ENCODE measurements at regions of chr2 and their contacts with region 1.

Region 1: GRCh38 chr2:27211829-27212627 is at the starts of genes ATRAID and SLC5A6:
- DNase-seq: peak; percentile 86 to 89
- ATAC-seq: peak; percentile 97 to 99 (median 98)
- H3K4me3 ChIP-seq: peak within 1 kb of the TSS; percentile 50 to 93 (median 77)
- H3K27ac ChIP-seq: peak within 1 kb of the TSS; percentile 89 to 99 (median 98)
- H3K4me1 ChIP-seq: peaks cover 7 to 29% (median 22%) of the 10 kb centered on the region in 9 donors
- H3K27me3 ChIP-seq: no peaks in the 10 kb centered on the region
- CTCF ChIP-seq: no peak
- total RNA-seq, gene ATRAID: 116 to 162 (median 129) TPM
- total RNA-seq, gene SLC5A6: 5.3 to 17.0 (median 8.8) TPM

Region 2: DNA sequence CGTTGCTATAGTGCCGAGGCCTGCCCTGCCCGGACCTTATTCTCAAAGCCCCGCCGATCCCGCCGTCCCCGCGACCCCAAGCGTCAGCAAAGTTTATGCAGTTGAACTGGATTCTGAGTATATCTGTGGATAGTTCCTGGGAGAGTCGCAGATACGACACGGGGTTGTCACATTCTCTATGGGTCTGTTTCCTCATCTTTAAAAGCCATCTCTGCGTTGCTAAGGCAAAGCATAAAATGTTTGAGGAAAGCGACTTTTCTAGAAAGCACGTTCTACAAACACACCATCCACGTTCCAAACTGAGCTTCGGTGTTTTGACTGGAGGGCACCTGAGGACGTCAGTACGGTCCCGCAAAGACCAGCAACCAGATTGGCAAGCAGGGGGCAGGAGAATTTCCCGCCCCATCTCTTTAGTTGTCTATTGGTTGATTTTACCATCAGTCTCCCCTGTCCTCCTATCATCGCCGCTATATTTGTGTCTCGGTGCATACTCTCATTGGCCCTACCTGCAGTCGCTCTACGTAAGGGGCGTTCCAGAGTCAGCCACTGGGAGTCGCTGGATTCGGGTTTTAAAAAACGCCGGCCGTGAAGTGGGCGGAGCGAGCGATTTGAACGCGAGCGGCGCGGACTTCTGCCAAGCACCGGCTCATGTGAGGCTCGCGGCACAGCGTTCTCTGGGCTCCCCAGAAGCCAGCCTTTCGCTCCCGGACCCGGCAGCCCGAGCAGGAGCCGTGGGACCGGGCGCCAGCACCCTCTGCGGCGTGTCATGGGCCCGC is 426.4 kb before region 1 on chr2 and contains the start of gene CENPA:
- intact Hi-C with region 1: loop called in 1 of 10 experiments (anchors 10 kb)
- DNase-seq: peak; percentile 94 to 99
- ATAC-seq: peak; percentile 98 to 100 (median 100)
- H3K4me3 ChIP-seq: peak within 1 kb of the TSS; percentile 54 to 94 (median 70)
- H3K27ac ChIP-seq: peak within 1 kb of the TSS in 5 of 10 donors; percentile 33 to 77 (median 42)
- H3K4me1 ChIP-seq: peaks cover 0 to 18% (median 12%) of the 10 kb centered on the region in 9 donors
- H3K27me3 ChIP-seq: peaks cover 0 to 6% (median 0%) of the 10 kb centered on the region in 7 donors
- CTCF ChIP-seq: peak in 8 of 9 donors; percentile 32 to 63 (median 54)
- total RNA-seq, gene CENPA: 0.30 to 33.1 (median 6.1) TPM in 8 of 10 donors, not detected in the others

Region 3: GRCh38 chr2:26970244-26970920 is 241.6 kb before region 1 on chr2 and contains the start of gene MAPRE3:
- intact Hi-C with region 1: loop called in 2 of 10 experiments (anchors 10 kb)
- DNase-seq: peak; percentile 77 to 86
- ATAC-seq: peak; percentile 93 to 96 (median 94)
- H3K4me3 ChIP-seq: peak within 1 kb of the TSS; percentile 68 to 95 (median 86)
- H3K27ac ChIP-seq: peak within 1 kb of the TSS in 9 of 10 donors; percentile 68 to 84 (median 81)
- H3K4me1 ChIP-seq: peaks cover 3 to 33% (median 26%) of the 10 kb centered on the region in 9 donors
- H3K27me3 ChIP-seq: peaks cover 0 to under 1% (median 0%) of the 10 kb centered on the region in 7 donors
- CTCF ChIP-seq: no peak
- total RNA-seq, gene MAPRE3: 34.9 to 62.0 (median 47.2) TPM

Region 4: GRCh38 chr2:27264753-27265535 is 52.9 kb after region 1 on chr2:
- intact Hi-C with region 1: no loop called
- DNase-seq: peak; percentile 71 to 77
- ATAC-seq: peak; percentile 68 to 88 (median 80)
- H3K4me3 ChIP-seq: peak overlapping the region in 9 of 10 donors; percentile 30 to 68 (median 63)
- H3K27ac ChIP-seq: peak overlapping the region in 8 of 10 donors; percentile 34 to 77 (median 48)
- H3K4me1 ChIP-seq: peaks cover 0 to 47% (median 34%) of the 10 kb centered on the region in 9 donors
- H3K27me3 ChIP-seq: peaks cover 0 to 97% (median 52%) of the 10 kb centered on the region in 7 donors
- CTCF ChIP-seq: peak in 8 of 9 donors; percentile 30 to 74 (median 57)

Region 5: DNA sequence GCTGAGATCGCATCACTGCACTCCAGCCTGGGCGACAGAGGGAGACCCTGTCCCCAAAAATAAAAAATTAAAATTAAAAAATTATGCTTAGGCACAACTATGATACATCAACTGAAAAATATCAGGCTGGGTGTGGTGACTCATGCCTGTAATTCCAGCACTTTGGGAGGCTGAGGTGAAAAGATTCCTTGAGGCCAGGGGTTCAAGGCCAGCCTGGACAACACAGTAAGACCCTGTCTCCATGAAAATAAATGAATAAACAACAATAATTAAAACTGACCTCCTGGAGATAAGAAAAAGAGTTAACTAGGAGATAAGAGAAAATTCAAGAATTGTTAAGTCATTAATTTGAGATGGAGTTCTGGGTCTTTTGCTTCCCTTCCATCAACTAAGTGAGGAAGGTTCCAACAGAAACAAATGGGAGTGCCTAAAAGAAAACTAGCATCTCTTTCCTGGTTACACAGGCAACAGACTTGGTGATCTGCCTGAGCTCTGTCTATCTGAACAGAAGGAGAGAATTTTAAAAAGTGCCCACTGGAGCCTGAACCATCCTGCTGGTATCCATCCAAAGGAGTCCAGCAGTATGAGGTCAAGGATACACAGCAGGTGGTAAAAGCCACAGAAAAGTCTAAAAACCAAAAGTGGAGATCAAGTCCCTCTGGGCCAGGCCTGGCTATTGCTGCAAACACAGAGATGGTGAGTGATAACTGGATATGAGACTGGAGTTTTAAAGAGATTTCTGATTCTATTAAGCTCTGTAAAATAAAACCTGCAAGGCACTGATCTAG is 188.5 kb after region 1 on chr2:
- intact Hi-C with region 1: no loop called
- DNase-seq: no peak
- ATAC-seq: no peak
- H3K4me3 ChIP-seq: no peak overlapping the region
- H3K27ac ChIP-seq: no peak overlapping the region
- H3K4me1 ChIP-seq: peaks cover 0 to 8% (median 0%) of the 10 kb centered on the region in 9 donors
- H3K27me3 ChIP-seq: no peaks in the 10 kb centered on the region
- CTCF ChIP-seq: no peak

Measured in heart right ventricle (tissue), 16 donors.